PC-9 (cell line): ENCODE measurements at regions of chr11 and their contacts with region 1.

Region 1: GRCh38 chr11:130359419-130359818 is 44.7 kb upstream of the ZBTB44 start:
- DNase-seq: no peak
- H3K4me3 ChIP-seq: no peak overlapping the region
- H3K27ac ChIP-seq: no peak overlapping the region
- H3K4me1 ChIP-seq: no peaks in the 10 kb centered on the region
- H3K27me3 ChIP-seq: 0 out of 2 replicates have a peak, but pooled peaks cover 3% of the 10 kb centered on the region
- CTCF ChIP-seq: no peak

Region 2: DNA sequence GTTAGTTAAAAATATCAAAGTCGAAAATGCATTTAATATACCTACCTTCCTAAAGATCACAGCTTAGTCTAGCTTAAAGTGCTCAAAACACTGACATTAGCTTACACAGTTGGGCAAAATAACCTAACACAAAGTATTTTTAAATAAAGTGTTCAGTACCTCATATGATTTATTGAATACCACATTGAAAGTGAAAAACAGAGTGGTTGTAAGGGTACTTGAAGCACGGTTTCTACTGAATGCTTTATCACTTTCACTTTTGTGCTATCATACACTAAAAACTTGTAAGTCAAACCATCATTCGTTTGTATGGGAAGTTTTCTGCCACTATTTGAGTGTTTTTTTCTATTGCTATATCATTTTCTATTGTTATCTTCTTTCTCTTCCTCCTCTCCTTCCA is 81.3 kb before region 1 on chr11:
- CTCF ChIA-PET with region 1: interaction called, 10 read pairs
- POLR2A ChIA-PET with region 1: no interaction called
- intact Hi-C with region 1: no loop called
- DNase-seq: peak in 1 of 2 experiments; percentile 19
- H3K4me3 ChIP-seq: no peak overlapping the region
- H3K27ac ChIP-seq: no peak overlapping the region
- H3K4me1 ChIP-seq: no peaks in the 10 kb centered on the region
- H3K27me3 ChIP-seq: no peaks in the 10 kb centered on the region
- CTCF ChIP-seq: no peak

Region 3: DNA sequence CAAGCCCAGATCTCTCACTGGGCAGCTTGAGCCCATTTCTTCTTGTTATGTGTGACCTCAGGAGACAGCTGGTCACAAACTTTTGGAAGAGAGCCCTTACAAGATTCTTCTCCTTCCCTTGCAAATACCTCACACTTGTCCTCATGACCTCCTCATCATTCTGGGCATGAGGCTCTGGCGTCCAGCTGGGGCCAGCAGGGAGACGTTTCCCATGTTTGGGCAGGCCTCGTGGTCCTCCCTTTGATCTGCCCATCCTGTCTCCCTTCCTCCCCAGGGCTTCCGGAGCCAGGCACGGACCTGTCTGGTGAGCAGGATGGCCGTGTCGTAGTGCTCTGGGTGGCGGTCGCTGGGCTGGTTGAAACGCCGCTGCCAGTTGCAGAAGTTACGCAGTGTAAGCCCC is 59.3 kb after region 1 on chr11:
- CTCF ChIA-PET with region 1: no interaction called
- POLR2A ChIA-PET with region 1: no interaction called
- intact Hi-C with region 1: no loop called
- DNase-seq: no peak
- H3K4me3 ChIP-seq: no peak overlapping the region
- H3K27ac ChIP-seq: no peak overlapping the region
- H3K4me1 ChIP-seq: no peaks in the 10 kb centered on the region
- H3K27me3 ChIP-seq: peaks cover 65% of the 10 kb centered on the region
- CTCF ChIP-seq: no peak